Panc1 (cell line): ENCODE measurements at regions of chr16 and their contacts with region 1.

Region 1: GRCh38 chr16:15782573-15783365 is 74.1 kb downstream of the MYH11 start:
- DNase-seq: no peak
- ATAC-seq: no peak
- H3K4me3 ChIP-seq: no peak overlapping the region
- H3K27ac ChIP-seq: no peak overlapping the region
- H3K4me1 ChIP-seq: no peaks in the 10 kb centered on the region; the same call in 1 of the 2 replicates
- H3K27me3 ChIP-seq: no peaks in the 10 kb centered on the region
- CTCF ChIP-seq: no peak

Region 2: GRCh38 chr16:15682105-15682570 is 100.6 kb before region 1 on chr16:
- CTCF ChIA-PET with region 1: no interaction called
- POLR2A ChIA-PET with region 1: no interaction called
- in situ Hi-C with region 1: no loop called
- intact Hi-C with region 1: no loop called
- DNase-seq: peak; percentile 86
- ATAC-seq: peak; percentile 83
- H3K4me3 ChIP-seq: no peak overlapping the region
- H3K27ac ChIP-seq: no peak overlapping the region
- H3K4me1 ChIP-seq: no peaks in the 10 kb centered on the region
- H3K27me3 ChIP-seq: no peaks in the 10 kb centered on the region
- CTCF ChIP-seq: no peak

Region 3: GRCh38 chr16:15817446-15817845 is 34.7 kb after region 1 on chr16:
- CTCF ChIA-PET with region 1: interaction called, 23 read pairs
- POLR2A ChIA-PET with region 1: no interaction called
- in situ Hi-C with region 1: loop called (anchors 5 kb)
- intact Hi-C with region 1: loop called (anchors 5 kb)
- DNase-seq: no peak
- ATAC-seq: no peak
- H3K4me3 ChIP-seq: no peak overlapping the region
- H3K27ac ChIP-seq: no peak overlapping the region
- H3K4me1 ChIP-seq: no peaks in the 10 kb centered on the region
- H3K27me3 ChIP-seq: no peaks in the 10 kb centered on the region
- CTCF ChIP-seq: no peak

Region 4: GRCh38 chr16:15865742-15866141 is 83.0 kb after region 1 on chr16:
- CTCF ChIA-PET with region 1: no interaction called
- POLR2A ChIA-PET with region 1: no interaction called
- in situ Hi-C with region 1: loop called (anchors 5 kb)
- intact Hi-C with region 1: no loop called
- DNase-seq: no peak
- ATAC-seq: no peak
- H3K4me3 ChIP-seq: no peak overlapping the region
- H3K27ac ChIP-seq: no peak overlapping the region
- H3K4me1 ChIP-seq: no peaks in the 10 kb centered on the region
- H3K27me3 ChIP-seq: no peaks in the 10 kb centered on the region
- CTCF ChIP-seq: no peak

Region 5: DNA sequence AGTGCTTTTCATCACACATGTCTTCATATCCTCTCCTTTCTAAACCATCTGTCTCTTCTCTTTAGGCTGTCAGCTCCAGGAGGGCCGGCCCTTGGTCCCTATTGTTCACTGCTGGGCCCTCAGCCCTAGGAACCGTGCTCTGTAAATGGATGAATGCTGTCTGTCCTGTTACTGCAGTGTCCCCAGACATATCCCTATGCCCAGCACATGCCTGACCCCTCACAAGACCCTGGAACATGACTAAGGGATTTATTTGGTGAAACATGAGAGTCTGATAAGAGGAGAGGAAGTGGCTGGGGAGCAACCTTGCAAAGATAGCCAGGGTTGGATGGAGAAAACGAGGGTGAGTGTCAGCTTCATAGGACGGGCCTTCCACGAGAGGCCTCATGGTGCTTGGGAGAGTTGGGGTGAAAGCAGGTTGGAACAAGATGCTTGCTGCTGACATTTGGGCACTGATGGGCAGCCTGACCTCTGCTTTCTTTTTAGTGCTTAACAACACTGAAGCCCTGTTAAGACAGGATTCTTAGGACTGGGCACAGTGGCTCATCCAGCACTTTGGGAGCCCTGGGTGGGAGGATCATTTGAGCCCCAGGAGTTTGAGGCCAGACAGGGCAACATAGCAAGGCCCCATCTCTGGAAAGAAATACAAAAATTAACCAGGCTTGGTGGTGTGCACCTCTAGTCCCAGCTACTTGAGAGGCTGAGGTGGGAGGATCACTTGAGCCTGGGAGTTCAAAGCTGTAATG is 205.7 kb after region 1 on chr16:
- CTCF ChIA-PET with region 1: no interaction called
- POLR2A ChIA-PET with region 1: interaction called, 12 read pairs
- in situ Hi-C with region 1: no loop called
- intact Hi-C with region 1: no loop called
- DNase-seq: no peak
- ATAC-seq: peak; percentile 12
- H3K4me3 ChIP-seq: no peak overlapping the region
- H3K27ac ChIP-seq: peak overlapping the region; percentile 97
- H3K4me1 ChIP-seq: peaks cover 81% of the 10 kb centered on the region
- H3K27me3 ChIP-seq: no peaks in the 10 kb centered on the region
- CTCF ChIP-seq: no peak